Gastrocnemius medialis (tissue), 4 donors: ENCODE measurements at regions of chr4 and their contacts with region 1.

Region 1: DNA sequence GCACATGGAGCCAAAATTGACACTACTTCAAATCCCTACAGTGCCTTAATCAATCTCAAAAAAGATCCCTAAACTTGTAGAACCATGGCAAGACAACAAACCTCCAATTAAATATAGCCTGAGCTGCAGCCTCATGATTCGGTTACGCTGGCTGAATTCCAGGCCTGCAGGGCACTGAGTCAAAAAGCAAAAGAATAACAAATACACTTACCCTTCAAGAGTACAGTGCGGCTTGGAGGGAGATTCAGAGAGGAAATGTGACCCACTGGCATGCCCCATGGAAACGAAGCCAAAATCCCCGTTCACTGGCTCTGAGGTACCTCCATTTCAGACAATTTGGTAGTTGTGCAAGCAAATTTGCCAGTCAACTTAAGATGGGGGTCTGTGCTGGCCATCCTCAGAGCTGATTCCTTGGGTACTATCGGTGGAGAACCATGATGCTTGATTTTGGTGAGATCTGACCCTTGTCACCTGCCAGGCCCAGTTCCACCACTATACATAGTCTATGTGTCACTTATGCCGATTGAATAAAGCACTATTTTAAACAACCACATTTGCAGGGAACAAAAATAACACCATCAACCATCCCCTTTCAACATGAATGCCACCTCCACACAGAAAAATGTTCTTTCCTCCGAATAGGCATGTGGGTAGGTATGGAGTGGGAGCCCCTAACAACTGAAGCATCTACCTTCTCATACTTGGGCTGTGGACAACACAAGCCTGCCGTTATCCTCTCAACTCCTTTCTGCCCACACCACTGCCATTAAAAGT is 2.1 kb downstream of the C4orf54 start:
- DNase-seq: peak; percentile 78 to 80
- ATAC-seq: peak; percentile 14 to 50
- H3K4me3 ChIP-seq: peak overlapping the region; percentile 62 to 75 (median 62)
- H3K27ac ChIP-seq: peak overlapping the region; percentile 94 to 99 (median 98)
- H3K4me1 ChIP-seq: peaks cover 47 to 55% of the 10 kb centered on the region in 2 donors
- H3K27me3 ChIP-seq: no peaks in the 10 kb centered on the region
- CTCF ChIP-seq: no peak
- POLR2A ChIP-seq: peak in 1 of 2 donors; percentile 30

Region 2: GRCh38 chr4:99633772-99634171 is 21.7 kb before region 1 on chr4:
- in situ Hi-C with region 1: no loop called
- intact Hi-C with region 1: no loop called
- DNase-seq: peak; percentile 86 to 87
- ATAC-seq: peak; percentile 85 to 87
- H3K4me3 ChIP-seq: no peak overlapping the region
- H3K27ac ChIP-seq: peak overlapping the region; percentile 75 to 99 (median 98)
- H3K4me1 ChIP-seq: peaks cover 45 to 68% of the 10 kb centered on the region in 2 donors
- H3K27me3 ChIP-seq: no peaks in the 10 kb centered on the region
- CTCF ChIP-seq: peak in 1 of 5 experiments; percentile 8
- POLR2A ChIP-seq: no peak

Region 3: DNA sequence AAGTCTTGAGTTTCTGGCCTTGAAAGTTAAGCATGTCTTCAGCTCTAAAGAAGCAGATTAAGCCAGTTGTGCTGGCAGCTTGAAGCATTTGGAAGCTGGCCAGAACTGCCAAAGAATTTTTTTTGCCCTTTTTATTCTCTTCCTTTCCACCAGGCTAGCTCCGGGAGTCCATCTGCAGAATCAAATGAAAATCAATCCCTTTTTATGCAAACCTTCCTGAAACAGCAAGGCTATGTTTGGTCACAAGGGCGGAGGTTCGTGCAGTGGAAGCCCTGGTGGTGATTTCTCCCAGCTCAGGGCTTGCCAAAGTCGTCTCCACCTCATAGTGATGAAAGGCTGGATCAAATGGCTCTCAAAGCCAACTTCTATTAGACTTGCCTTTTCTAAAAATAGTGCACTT is 23.7 kb after region 1 on chr4:
- in situ Hi-C with region 1: no loop called
- intact Hi-C with region 1: loop called (anchors 2 kb)
- DNase-seq: peak; percentile 79 to 84
- ATAC-seq: peak; percentile 98 to 99
- H3K4me3 ChIP-seq: peak overlapping the region in 1 of 4 donors; percentile 14
- H3K27ac ChIP-seq: peak overlapping the region; percentile 81 to 90 (median 84)
- H3K4me1 ChIP-seq: peaks cover 8 to 21% of the 10 kb centered on the region in 2 donors
- H3K27me3 ChIP-seq: no peaks in the 10 kb centered on the region
- CTCF ChIP-seq: peak in 2 of 5 experiments; percentile 26 to 47
- POLR2A ChIP-seq: no peak

Region 4: DNA sequence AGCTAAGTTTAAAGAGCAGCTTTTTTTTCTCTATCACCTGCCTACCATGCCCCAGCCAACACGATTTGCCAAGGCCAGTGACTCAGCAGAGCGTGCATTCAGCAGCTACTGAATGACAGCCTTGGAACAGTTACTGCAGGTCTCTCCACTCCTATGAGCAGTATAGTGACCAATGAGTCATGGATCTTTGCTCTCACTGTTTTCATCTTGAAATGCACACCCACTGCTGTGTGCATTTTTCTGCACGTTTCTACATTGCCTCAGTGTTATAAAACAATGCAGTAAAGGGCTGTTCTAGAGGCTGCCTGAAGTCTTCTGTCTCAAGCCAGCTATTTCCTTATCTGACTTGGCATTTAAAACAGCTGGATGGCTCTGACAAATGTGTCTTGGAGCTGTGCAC is 68.1 kb after region 1 on chr4:
- in situ Hi-C with region 1: no loop called
- intact Hi-C with region 1: loop called (anchors 2 kb)
- DNase-seq: peak; percentile 83 to 94
- ATAC-seq: peak; percentile 97 to 98
- H3K4me3 ChIP-seq: no peak overlapping the region
- H3K27ac ChIP-seq: peak overlapping the region; percentile 89 to 95 (median 91)
- H3K4me1 ChIP-seq: peaks cover 38 to 48% of the 10 kb centered on the region in 2 donors
- H3K27me3 ChIP-seq: no peaks in the 10 kb centered on the region
- CTCF ChIP-seq: no peak
- POLR2A ChIP-seq: no peak

Region 5: DNA sequence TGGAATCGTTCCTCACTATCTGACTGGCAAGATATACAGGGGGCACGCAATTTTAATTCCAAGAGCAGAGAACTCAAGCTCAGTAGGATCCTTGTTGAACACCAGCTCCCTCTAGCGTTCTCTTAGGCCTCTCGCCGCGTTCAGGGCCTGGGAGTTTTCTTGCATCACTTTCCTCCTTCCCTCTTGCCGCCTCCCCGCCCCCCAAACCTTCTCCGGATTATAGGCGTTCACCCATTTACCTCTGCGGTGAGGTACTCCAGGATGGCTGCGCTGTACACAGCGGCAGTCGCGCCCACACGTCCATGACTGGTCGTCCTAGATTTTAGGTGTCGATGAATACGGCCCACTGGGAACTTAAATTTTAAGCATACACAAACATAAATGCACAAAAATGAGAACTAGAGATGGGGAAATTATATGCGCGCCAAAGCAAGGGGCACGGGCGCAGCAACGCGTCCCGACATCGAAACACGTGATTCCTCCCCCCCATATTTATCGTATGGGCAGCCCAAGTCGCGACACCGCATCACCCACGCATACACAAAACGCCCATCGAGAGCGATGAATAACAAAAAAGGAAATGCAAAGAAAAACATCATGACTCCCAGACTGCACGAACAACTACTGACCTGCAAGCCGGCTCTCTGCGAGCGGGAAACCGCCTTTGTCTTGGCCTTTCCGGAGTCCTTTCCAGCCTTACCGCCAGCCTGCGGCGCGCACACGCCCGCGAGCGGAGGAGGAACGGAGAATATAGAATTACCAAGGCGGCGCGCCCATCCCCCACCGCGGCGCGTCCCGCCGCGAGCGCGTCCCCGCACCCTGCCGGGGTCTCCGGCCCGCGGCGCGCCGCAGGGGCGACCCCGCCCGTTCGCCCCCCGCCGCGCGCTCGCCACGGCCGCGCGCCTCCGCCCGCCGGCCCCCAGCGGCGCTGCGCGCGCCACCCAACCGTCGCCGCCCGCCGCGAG is 293.8 kb after region 1 on chr4:
- in situ Hi-C with region 1: no loop called
- intact Hi-C with region 1: loop called (anchors 10 kb)
- DNase-seq: peak; percentile 81 to 89
- ATAC-seq: peak; percentile 56 to 67
- H3K4me3 ChIP-seq: peak overlapping the region; percentile 79 to 95 (median 86)
- H3K27ac ChIP-seq: peak overlapping the region; percentile 96 to 98 (median 98)
- H3K4me1 ChIP-seq: peaks cover 30 to 40% of the 10 kb centered on the region in 2 donors
- H3K27me3 ChIP-seq: no peaks in the 10 kb centered on the region
- CTCF ChIP-seq: peak; percentile 73 to 93 (median 80)
- POLR2A ChIP-seq: no peak

Region 6: DNA sequence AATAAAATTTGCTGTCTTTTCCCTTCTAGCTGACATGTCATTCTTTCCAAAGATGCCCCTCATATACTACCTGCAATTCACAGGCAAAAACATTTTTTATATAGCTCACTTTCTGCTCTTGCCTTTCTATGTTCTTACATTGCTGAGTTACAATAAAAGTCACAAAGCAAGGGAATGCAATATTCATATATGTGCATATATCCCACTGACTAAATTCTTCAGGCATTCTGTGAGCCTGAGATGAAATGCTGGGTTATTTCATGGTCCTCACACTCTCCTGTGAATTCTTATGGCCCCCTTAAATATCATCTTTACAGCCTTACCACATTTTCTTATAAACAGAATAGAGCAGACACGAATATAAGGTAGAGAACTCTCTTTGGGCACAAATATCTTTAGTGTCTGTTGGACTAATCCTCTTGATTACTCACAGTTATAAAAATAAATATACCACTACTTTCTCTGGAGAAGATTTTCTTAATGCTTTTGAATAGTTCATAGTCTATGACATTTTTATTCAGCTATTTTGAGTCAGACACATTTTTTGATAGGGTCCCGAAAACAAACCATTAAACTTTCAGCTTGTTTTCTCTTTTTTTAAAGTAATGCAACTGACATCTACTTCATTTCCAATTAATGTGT is 378.6 kb after region 1 on chr4:
- in situ Hi-C with region 1: no loop called
- intact Hi-C with region 1: no loop called
- DNase-seq: no peak
- ATAC-seq: no peak
- H3K4me3 ChIP-seq: no peak overlapping the region
- H3K27ac ChIP-seq: no peak overlapping the region
- H3K4me1 ChIP-seq: no peaks in the 10 kb centered on the region
- H3K27me3 ChIP-seq: no peaks in the 10 kb centered on the region
- CTCF ChIP-seq: no peak
- POLR2A ChIP-seq: no peak

Region 7: GRCh38 chr4:100288161-100288560 is 632.7 kb after region 1 on chr4:
- in situ Hi-C with region 1: no loop called
- intact Hi-C with region 1: loop called (anchors 10 kb)
- DNase-seq: no peak
- ATAC-seq: no peak
- H3K4me3 ChIP-seq: no peak overlapping the region
- H3K27ac ChIP-seq: peak overlapping the region; percentile 47 to 87 (median 72)
- H3K4me1 ChIP-seq: peaks cover 29 to 65% of the 10 kb centered on the region in 2 donors
- H3K27me3 ChIP-seq: no peaks in the 10 kb centered on the region
- CTCF ChIP-seq: no peak
- POLR2A ChIP-seq: no peak